ENCODE measurements at regions of chr1 and their contacts with region 1.

Region 1: DNA sequence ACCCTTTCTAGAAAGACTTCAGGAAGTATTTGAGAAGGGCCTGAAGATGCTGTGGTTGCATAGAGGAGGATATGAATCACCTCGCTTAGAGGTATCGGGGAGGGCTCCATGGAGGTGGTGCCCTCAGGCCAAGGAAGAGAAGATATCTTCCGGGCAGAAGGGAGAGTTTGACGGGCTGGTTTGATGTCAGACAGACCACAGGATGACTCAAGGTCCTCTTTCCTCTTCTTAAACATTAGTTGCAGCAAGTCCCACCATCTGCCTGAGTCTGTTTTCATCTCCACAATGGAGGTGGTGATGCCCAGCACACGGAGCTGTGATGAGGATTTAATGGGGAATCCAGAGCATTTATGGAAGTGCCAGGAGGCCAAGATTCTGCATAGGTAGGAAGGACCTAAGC is 25.1 kb upstream of the RUNX3 start:
- DNase-seq: peak; percentile 94
- H3K4me3 Mint-ChIP-seq: peak overlapping the region; percentile 89
- H3K27ac Mint-ChIP-seq: peak overlapping the region; percentile 95
- H3K4me1 Mint-ChIP-seq: peaks cover 85% of the 10 kb centered on the region
- H3K27me3 Mint-ChIP-seq: no peaks in the 10 kb centered on the region

Region 2: GRCh38 chr1:24248859-24249258 is 706.3 kb before region 1 on chr1:
- CTCF ChIA-PET with region 1: no interaction called
- intact Hi-C with region 1: no loop called
- DNase-seq: no peak
- H3K4me3 Mint-ChIP-seq: no peak overlapping the region
- H3K27ac Mint-ChIP-seq: no peak overlapping the region
- H3K4me1 Mint-ChIP-seq: no peaks in the 10 kb centered on the region
- H3K27me3 Mint-ChIP-seq: no peaks in the 10 kb centered on the region

Region 3: GRCh38 chr1:24744911-24745710 is 210.1 kb before region 1 on chr1 and contains the start of gene CLIC4:
- CTCF ChIA-PET with region 1: no interaction called
- intact Hi-C with region 1: loop called (anchors 2 kb)
- DNase-seq: peak; percentile 100
- H3K4me3 Mint-ChIP-seq: peak within 1 kb of the TSS; percentile 88
- H3K27ac Mint-ChIP-seq: peak within 1 kb of the TSS; percentile 77
- H3K4me1 Mint-ChIP-seq: peaks cover 52% of the 10 kb centered on the region
- H3K27me3 Mint-ChIP-seq: no peaks in the 10 kb centered on the region
- total RNA-seq, gene CLIC4: 38.0 to 44.3 TPM

Region 4: GRCh38 chr1:24822887-24823286 is 132.3 kb before region 1 on chr1:
- CTCF ChIA-PET with region 1: no interaction called
- intact Hi-C with region 1: no loop called
- DNase-seq: no peak
- H3K4me3 Mint-ChIP-seq: no peak overlapping the region
- H3K27ac Mint-ChIP-seq: no peak overlapping the region
- H3K4me1 Mint-ChIP-seq: no peaks in the 10 kb centered on the region
- H3K27me3 Mint-ChIP-seq: no peaks in the 10 kb centered on the region

Region 5: DNA sequence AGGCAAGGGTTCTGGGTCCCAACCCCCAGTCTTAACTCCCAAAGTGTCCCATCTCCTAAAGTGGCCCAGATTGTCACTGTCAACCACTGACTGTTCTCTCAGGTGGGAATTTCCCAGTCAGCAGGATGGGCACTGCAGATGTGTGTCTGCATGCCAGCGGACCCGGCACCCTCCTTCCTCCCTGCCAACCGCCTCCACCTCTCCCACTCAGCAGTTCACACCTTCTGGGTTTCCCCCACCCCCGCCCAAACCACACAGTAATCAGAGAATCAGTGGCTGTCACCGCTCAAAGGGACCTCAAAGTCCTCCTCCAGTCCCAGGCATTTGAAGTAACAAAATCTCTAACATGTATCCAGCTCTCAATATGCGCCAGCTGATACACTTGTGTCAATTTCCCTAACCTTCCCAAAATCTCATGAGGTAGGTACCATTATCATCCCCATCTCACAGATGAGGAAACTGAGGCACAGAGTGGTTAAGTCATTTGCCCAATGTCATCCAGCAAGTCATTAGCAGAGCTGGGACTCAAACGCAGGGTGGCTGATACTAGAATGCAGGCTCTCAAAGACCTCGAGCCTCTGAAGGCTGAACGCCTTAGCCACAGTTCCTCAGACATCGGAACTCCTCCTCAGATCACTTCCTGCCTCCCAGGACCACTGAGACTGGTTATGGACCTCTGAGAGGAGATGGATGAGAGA is 29.9 kb before region 1 on chr1:
- CTCF ChIA-PET with region 1: interaction called, 3 read pairs
- intact Hi-C with region 1: loop called (anchors 1 kb)
- DNase-seq: peak; percentile 93
- H3K4me3 Mint-ChIP-seq: peak overlapping the region; percentile 94
- H3K27ac Mint-ChIP-seq: peak overlapping the region; percentile 77
- H3K4me1 Mint-ChIP-seq: peaks cover 70% of the 10 kb centered on the region
- H3K27me3 Mint-ChIP-seq: no peaks in the 10 kb centered on the region

Region 6: GRCh38 chr1:24978383-24979032 is 23.3 kb after region 1 on chr1:
- CTCF ChIA-PET with region 1: no interaction called
- intact Hi-C with region 1: loop called (anchors 1 kb)
- DNase-seq: no peak
- H3K4me3 Mint-ChIP-seq: no peak overlapping the region
- H3K27ac Mint-ChIP-seq: peak overlapping the region; percentile 40
- H3K4me1 Mint-ChIP-seq: peaks cover 65% of the 10 kb centered on the region
- H3K27me3 Mint-ChIP-seq: no peaks in the 10 kb centered on the region

Region 7: DNA sequence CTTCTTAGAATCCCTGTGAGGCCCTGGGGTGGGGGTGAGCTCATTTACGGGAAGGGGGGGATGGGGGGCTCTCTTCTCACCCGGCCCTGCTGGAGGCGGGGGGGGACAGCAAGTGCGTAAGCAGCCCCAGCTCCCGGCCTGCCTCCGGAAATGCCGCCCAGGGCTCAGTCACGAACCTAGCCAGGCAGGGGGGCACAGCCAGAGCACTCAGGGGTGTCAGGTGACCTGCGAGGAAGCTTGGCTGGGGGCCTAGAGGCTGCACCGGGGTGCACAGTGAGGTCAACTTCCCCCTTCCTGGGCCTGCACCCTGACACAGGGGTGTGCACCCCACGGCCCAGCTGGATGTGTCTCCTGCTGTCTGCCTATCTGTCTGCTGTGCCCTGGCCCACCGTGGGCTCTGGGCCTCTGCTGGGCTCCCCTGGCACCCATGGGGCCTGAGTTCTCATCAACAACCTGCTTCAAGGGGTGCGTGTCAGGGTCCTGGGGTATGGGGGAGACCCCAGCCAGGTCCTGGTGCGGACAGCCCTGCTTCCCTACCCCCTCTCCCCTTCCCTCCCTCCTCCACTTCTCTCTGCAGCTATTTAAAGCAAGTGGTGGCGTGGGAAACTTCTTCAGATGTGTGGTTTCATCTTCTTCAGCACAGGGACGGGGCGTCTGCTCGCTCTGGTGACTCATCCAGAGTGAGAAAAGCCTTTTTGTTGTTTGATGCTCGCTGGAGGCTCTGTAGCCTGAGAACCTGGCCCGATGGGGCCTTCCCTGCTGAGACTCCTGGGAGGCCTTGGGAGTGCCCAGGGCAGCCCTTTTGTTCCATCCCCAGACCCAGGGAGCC is 67.4 kb after region 1 on chr1:
- CTCF ChIA-PET with region 1: interaction called, 4 read pairs
- intact Hi-C with region 1: loop called (anchors 1 kb)
- DNase-seq: peak; percentile 98
- H3K4me3 Mint-ChIP-seq: peak overlapping the region; percentile 71
- H3K27ac Mint-ChIP-seq: peak overlapping the region; percentile 96
- H3K4me1 Mint-ChIP-seq: peaks cover 86% of the 10 kb centered on the region
- H3K27me3 Mint-ChIP-seq: no peaks in the 10 kb centered on the region

Region 8: DNA sequence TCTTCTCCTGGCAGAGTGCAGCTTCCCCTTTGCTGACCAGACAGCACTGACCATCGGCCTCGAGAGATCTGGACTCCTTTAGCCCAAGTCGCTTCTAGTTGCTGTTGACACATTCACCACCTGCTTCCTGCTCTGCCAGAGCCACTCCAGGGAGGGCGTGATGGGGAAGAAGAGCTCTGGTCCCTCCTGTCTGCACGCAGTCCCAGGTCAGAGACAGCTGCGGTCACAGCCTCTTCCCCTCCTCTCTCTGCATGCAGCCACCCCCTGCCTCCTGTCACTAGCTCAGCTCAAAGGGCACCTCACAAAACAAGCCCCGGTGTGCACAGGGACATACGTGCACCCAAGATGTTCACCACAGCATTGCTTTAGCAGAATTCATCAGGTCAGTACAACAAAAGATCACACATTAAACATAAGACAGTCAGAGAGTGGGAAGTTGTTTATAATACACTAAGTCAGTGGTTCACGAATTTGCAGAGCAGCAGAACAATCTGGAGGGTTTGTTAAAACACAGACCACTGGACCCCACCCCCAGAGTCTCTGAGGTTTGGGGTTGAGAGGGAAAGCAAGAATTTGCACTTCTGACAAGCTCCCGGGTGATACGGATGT is 144.3 kb after region 1 on chr1:
- CTCF ChIA-PET with region 1: interaction called, 9 read pairs
- intact Hi-C with region 1: loop called (anchors 5 kb)
- DNase-seq: peak; percentile 39
- H3K4me3 Mint-ChIP-seq: no peak overlapping the region
- H3K27ac Mint-ChIP-seq: peak overlapping the region; percentile 25
- H3K4me1 Mint-ChIP-seq: peaks cover 54% of the 10 kb centered on the region
- H3K27me3 Mint-ChIP-seq: no peaks in the 10 kb centered on the region